Natural killer cell (primary cell): ENCODE measurements at regions of chr16 and their contacts with region 1.

Region 1: GRCh38 chr16:85935974-85936760 is 37.2 kb downstream of the IRF8 start:
- DNase-seq: peak; percentile 79 to 88
- ATAC-seq: peak; percentile 78 to 86 (median 85)
- H3K4me3 ChIP-seq: peak overlapping the region; percentile 41
- H3K4me3 Mint-ChIP-seq: peak overlapping the region; percentile 77
- H3K27ac ChIP-seq: peak overlapping the region; percentile 97
- H3K27ac Mint-ChIP-seq: peak overlapping the region; percentile 92 to 94
- H3K4me1 ChIP-seq: peaks cover 83% of the 10 kb centered on the region
- H3K4me1 Mint-ChIP-seq: peaks cover 63 to 74% of the 10 kb centered on the region in 2 donors
- H3K27me3 ChIP-seq: no peaks in the 10 kb centered on the region
- H3K27me3 Mint-ChIP-seq: no peaks in the 10 kb centered on the region
- CTCF ChIP-seq: no peak

Region 2: DNA sequence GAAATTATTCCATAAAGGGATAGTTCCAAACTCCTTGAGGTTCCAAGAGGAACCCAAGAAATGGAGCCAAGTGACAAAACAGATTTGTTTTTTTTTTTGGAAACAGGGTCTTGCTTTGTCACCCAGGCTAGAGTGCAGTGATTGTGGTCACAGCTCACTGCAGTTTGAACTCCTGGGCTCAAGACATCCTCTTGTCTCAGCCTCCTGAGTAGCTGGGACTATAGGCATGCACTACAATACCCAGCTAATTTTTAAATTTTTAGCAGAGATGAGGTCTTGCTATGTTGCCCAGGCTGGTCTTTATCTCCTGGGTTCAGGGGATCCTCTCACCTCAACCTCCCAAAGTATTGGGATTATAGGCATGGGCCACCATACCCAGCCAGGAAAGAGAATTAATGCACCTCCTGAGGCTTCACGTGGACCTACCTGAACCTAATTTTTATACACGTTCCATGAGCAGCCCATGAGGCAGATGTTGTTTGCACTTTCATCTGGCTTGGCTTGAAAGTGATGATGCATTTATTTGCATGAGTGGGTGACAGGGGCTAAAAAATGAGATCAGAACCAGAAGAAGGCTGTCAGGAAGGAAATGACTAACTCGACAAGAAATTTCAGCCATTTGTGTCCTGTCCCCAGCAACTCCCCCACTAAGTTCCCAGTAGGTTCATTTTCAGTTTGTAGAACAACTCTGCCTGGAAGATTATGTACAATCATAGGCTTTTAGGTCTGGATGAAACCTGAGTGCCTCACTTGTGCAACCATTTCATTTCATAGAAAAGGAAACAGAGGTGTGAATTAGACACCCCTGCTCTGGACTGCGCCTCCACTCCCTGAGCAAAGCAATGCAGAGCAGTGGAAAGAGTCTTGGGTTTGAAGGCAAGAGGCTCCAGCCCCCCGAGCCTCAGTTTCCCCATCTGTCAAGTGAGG is 47.5 kb before region 1 on chr16:
- intact Hi-C with region 1: loop called (anchors 1 kb)
- DNase-seq: peak in 1 of 2 donors; percentile 52
- ATAC-seq: peak; percentile 89 to 95 (median 93)
- H3K4me3 ChIP-seq: no peak overlapping the region
- H3K4me3 Mint-ChIP-seq: peak overlapping the region; percentile 70
- H3K27ac ChIP-seq: peak overlapping the region; percentile 69
- H3K27ac Mint-ChIP-seq: peak overlapping the region; percentile 84 to 88
- H3K4me1 ChIP-seq: peaks cover 17% of the 10 kb centered on the region
- H3K4me1 Mint-ChIP-seq: peaks cover 22 to 30% of the 10 kb centered on the region in 2 donors
- H3K27me3 ChIP-seq: no peaks in the 10 kb centered on the region
- H3K27me3 Mint-ChIP-seq: peaks cover 13 to 16% of the 10 kb centered on the region in 2 donors
- CTCF ChIP-seq: no peak

Region 3: GRCh38 chr16:85916141-85916890 is 19.9 kb before region 1 on chr16:
- intact Hi-C with region 1: loop called (anchors 2 kb)
- DNase-seq: peak; percentile 34 to 48
- ATAC-seq: peak; percentile 76 to 84 (median 82)
- H3K4me3 ChIP-seq: no peak overlapping the region
- H3K4me3 Mint-ChIP-seq: peak overlapping the region; percentile 83
- H3K27ac ChIP-seq: peak overlapping the region; percentile 45
- H3K27ac Mint-ChIP-seq: peak overlapping the region; percentile 80 to 89
- H3K4me1 ChIP-seq: peaks cover 74% of the 10 kb centered on the region
- H3K4me1 Mint-ChIP-seq: peaks cover 66 to 78% of the 10 kb centered on the region in 2 donors
- H3K27me3 ChIP-seq: no peaks in the 10 kb centered on the region
- H3K27me3 Mint-ChIP-seq: no peaks in the 10 kb centered on the region
- CTCF ChIP-seq: no peak

Region 4: DNA sequence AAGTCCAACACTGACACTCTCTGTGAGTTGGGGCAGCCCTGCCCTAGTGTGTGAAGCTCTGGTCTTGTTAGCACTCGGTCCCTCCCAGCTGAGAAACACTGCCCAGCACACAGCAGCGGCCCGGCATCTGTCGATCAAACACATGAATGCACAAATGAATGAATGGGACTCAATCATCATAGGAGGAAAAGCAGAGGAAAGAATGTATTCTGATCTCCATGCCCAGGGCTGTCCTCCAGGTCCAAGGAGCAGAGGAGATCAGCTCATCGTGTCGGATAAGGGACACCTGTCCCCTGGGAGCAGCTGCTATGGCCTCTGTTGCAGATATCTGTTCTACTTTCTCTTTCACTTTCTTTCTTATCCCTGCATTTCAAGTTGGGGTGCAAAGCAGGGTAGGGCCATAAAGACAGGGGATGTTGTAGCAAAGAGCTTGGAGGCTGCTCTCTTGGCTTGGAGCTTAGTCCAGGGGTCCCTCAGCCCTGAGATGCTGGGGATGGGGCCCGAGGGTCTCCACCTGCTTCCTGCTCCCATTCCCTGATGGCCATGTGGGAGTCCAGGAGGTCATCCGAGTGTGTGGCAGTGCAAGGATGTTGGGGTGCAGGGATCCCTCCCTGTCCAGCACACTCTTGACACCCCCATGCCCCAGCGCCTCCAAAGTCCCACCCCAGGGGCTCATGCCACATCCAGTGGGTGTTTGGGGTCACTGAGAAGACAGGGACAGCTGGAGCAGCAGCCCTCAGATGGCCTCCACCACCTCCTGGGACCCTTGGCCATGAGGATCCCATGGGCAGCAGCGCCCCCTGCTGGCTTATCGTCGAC is 51.0 kb after region 1 on chr16:
- intact Hi-C with region 1: loop called (anchors 5 kb)
- DNase-seq: peak; percentile 47 to 64
- ATAC-seq: peak in 2 of 3 donors; percentile 34 to 46
- H3K4me3 ChIP-seq: no peak overlapping the region
- H3K4me3 Mint-ChIP-seq: peak overlapping the region; percentile 61
- H3K27ac ChIP-seq: peak overlapping the region; percentile 10
- H3K27ac Mint-ChIP-seq: peak overlapping the region; percentile 91 to 95
- H3K4me1 ChIP-seq: peaks cover 72% of the 10 kb centered on the region
- H3K4me1 Mint-ChIP-seq: peaks cover 31 to 54% of the 10 kb centered on the region in 2 donors
- H3K27me3 ChIP-seq: no peaks in the 10 kb centered on the region
- H3K27me3 Mint-ChIP-seq: no peaks in the 10 kb centered on the region
- CTCF ChIP-seq: peak; percentile 57